HCT116 (cell line): ENCODE measurements at regions of chr14 and their contacts with region 1.

Region 1: DNA sequence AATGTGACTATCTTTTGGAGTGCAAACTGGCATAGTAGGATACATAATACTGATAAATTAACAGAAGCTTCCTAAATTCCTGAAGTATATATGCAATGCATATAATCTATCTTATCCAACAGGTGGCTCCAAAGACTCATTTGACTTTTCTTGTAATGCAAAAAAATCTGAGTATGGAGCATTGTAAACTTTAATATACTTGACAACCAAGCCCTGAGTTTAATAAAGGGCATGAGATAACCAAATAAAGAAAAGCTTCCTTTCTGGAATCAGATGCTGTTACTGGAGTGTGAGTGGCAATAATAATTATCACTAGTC is 1003.5 kb downstream of the FSCB start:
- DNase-seq: no peak
- ATAC-seq: no peak
- H3K4me3 ChIP-seq: no peak overlapping the region
- H3K27ac ChIP-seq: no peak overlapping the region
- H3K4me1 ChIP-seq: no peaks in the 10 kb centered on the region
- H3K27me3 ChIP-seq: no peaks in the 10 kb centered on the region
- CTCF ChIP-seq: 0 out of 6 replicates have a peak, but pooled peaks of 1 of the 3 experiments have one; percentile 11
- POLR2A ChIP-seq: no peak
- RAD21 ChIP-seq: no peak; the same call in 1 of the 2 replicates

Region 2: GRCh38 chr14:43765474-43765873 is 261.9 kb after region 1 on chr14:
- CTCF ChIA-PET with region 1: no interaction called
- POLR2A ChIA-PET with region 1: no interaction called
- RAD21 ChIA-PET with region 1: no interaction called
- intact Hi-C with region 1: no loop called
- DNase-seq: no peak
- ATAC-seq: no peak
- H3K4me3 ChIP-seq: no peak overlapping the region
- H3K27ac ChIP-seq: no peak overlapping the region
- H3K4me1 ChIP-seq: no peaks in the 10 kb centered on the region
- H3K27me3 ChIP-seq: no peaks in the 10 kb centered on the region
- CTCF ChIP-seq: no peak
- POLR2A ChIP-seq: no peak
- RAD21 ChIP-seq: no peak

Region 3: DNA sequence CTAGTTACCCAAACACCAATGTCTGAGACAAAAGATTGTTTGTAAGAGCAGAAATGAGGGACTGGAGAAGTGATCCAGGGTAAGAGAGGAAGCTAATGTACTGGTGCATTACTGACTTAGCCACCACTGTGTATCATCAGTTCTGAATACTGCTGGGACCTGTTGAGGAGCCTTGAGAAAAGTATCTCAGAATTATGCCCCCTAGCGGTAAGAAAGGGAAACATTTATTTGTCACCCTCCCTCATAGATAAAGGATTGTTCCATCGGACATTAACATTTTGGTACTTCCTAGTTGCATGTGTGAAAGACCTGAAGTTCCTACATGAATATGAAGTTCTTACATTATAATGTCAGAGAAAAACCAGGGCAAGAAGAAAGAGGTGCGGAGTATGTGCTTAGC is 391.0 kb after region 1 on chr14:
- CTCF ChIA-PET with region 1: no interaction called
- POLR2A ChIA-PET with region 1: no interaction called
- RAD21 ChIA-PET with region 1: no interaction called
- intact Hi-C with region 1: loop called (anchors 10 kb)
- DNase-seq: peak; percentile 7
- ATAC-seq: peak; percentile 73
- H3K4me3 ChIP-seq: no peak overlapping the region
- H3K27ac ChIP-seq: no peak overlapping the region
- H3K4me1 ChIP-seq: no peaks in the 10 kb centered on the region
- H3K27me3 ChIP-seq: no peaks in the 10 kb centered on the region
- CTCF ChIP-seq: peak in 2 of 3 experiments; percentile 41 to 70; a peak in 4 of 6 replicates
- POLR2A ChIP-seq: no peak
- RAD21 ChIP-seq: 0 out of 2 replicates have a peak, but pooled peaks have one; percentile 8

Region 4: GRCh38 chr14:44657696-44658388 is 1154.3 kb after region 1 on chr14:
- CTCF ChIA-PET with region 1: no interaction called
- POLR2A ChIA-PET with region 1: no interaction called
- RAD21 ChIA-PET with region 1: no interaction called
- intact Hi-C with region 1: loop called (anchors 10 kb)
- DNase-seq: no peak
- ATAC-seq: no peak
- H3K4me3 ChIP-seq: no peak overlapping the region
- H3K27ac ChIP-seq: no peak overlapping the region
- H3K4me1 ChIP-seq: no peaks in the 10 kb centered on the region
- H3K27me3 ChIP-seq: no peaks in the 10 kb centered on the region
- CTCF ChIP-seq: peak; percentile 26 to 43 (median 32); a peak in 4 of 6 replicates
- POLR2A ChIP-seq: no peak
- RAD21 ChIP-seq: peak; percentile 56